Calu3 (cell line): ENCODE measurements at regions of chr18 and their contacts with region 1.

Region 1: GRCh38 chr18:32470713-32471633 is at the start of gene GAREM1:
- DNase-seq: peak; percentile 96
- H3K4me3 Mint-ChIP-seq: peak within 1 kb of the TSS; percentile 80
- H3K27ac Mint-ChIP-seq: peak within 1 kb of the TSS; percentile 48
- H3K4me1 Mint-ChIP-seq: peaks cover 51% of the 10 kb centered on the region
- H3K27me3 Mint-ChIP-seq: no peaks in the 10 kb centered on the region
- CTCF ChIP-seq: peak; percentile 62
- total RNA-seq, gene GAREM1: 17.0 and 19.3 TPM in 2 replicates

Region 2: GRCh38 chr18:32158108-32158624 is 312.8 kb before region 1 on chr18:
- CTCF ChIA-PET with region 1: interaction called, 20 read pairs
- intact Hi-C with region 1: loop called (anchors 2 kb)
- DNase-seq: peak; percentile 78
- H3K4me3 Mint-ChIP-seq: peak overlapping the region; percentile 71
- H3K27ac Mint-ChIP-seq: no peak overlapping the region
- H3K4me1 Mint-ChIP-seq: peaks cover 20% of the 10 kb centered on the region
- H3K27me3 Mint-ChIP-seq: no peaks in the 10 kb centered on the region
- CTCF ChIP-seq: peak; percentile 80

Region 3: DNA sequence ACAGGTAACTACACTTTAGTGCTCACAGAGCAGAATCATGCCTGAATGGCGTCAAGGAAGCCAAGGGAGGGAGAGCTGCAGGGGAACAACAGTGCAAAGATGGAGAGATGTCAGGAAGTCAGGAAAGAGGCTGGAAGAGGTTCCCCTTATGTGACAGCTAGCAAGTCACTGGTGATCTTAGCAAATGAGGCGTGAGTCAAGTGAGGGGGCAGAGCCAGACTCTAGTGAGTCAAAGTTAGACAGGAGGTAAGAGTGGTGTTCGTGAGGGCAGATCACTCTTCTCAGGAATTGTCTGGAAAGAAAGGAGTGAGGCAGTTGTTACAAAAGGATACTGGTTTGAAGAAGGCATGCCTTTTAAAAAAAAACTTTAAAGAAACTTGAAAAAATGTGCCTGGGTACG is 194.1 kb before region 1 on chr18:
- CTCF ChIA-PET with region 1: interaction called, 43 read pairs
- intact Hi-C with region 1: loop called (anchors 5 kb)
- DNase-seq: no peak
- H3K4me3 Mint-ChIP-seq: no peak overlapping the region
- H3K27ac Mint-ChIP-seq: no peak overlapping the region
- H3K4me1 Mint-ChIP-seq: peaks cover 41% of the 10 kb centered on the region
- H3K27me3 Mint-ChIP-seq: no peaks in the 10 kb centered on the region
- CTCF ChIP-seq: no peak

Region 4: DNA sequence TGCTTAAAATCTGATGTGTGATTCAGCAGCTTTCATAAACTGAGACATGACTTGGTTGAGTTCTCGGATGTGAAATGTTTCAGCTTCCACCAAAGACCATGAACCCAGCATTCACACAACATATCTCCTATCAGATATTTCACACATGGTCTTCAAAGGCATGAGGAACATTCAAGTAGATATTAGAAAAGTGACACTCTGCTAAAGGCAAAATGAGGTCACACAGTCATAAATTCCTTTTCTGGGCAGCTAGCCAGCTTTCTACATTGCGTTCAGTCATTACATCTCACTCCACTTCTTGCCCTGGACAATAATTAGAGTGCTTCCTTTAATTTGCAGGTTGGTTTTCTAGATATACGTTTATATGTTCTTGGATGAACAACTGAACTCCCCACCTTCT is 97.0 kb before region 1 on chr18:
- CTCF ChIA-PET with region 1: interaction called, 21 read pairs
- intact Hi-C with region 1: loop called (anchors 2 kb)
- DNase-seq: peak; percentile 53
- H3K4me3 Mint-ChIP-seq: peak overlapping the region; percentile 5
- H3K27ac Mint-ChIP-seq: peak overlapping the region; percentile 78
- H3K4me1 Mint-ChIP-seq: peaks cover 52% of the 10 kb centered on the region
- H3K27me3 Mint-ChIP-seq: no peaks in the 10 kb centered on the region
- CTCF ChIP-seq: no peak

Region 5: DNA sequence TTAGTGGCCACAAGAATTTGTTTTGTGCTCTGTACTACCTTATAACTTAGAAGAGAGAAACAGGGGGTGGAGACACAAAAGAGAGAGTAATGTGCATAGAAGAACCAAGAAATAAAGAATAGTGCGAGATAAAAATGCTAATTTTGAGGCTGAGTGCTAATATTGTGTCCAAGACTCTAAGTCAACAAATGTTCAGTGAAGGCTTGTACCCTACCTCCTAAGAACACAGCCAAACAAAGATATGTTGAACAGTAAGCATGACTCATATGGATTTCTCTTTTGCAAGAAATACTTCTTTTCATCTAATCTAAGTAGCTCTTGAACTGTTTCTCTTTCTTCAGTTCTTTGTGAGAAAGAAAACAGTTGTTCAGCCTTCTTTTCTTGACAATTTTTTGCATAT is 45.5 kb before region 1 on chr18:
- CTCF ChIA-PET with region 1: interaction called, 3 read pairs
- intact Hi-C with region 1: loop called (anchors 5 kb)
- DNase-seq: no peak
- H3K4me3 Mint-ChIP-seq: no peak overlapping the region
- H3K27ac Mint-ChIP-seq: peak overlapping the region; percentile 56
- H3K4me1 Mint-ChIP-seq: peaks cover 66% of the 10 kb centered on the region
- H3K27me3 Mint-ChIP-seq: no peaks in the 10 kb centered on the region
- CTCF ChIP-seq: no peak

Region 6: DNA sequence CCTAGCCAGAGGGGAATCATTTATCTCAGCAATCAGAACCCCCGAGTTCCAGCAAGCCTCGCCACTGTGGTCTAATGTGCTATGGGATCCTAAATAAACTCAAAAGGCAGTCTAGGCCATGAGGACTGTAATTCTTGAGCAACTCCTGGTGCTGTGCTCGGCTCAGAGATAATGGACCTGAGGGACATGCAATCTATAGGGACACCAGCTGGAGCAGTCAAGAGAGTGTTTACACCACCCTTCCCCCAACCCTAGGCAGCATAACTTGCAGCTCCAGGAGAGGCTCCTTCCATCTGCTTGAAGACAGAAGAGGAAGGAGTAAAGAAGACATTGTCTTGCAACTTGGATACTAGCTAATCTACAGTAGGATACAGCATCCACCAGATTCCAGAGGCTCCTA is 527.3 kb after region 1 on chr18:
- CTCF ChIA-PET with region 1: no interaction called
- intact Hi-C with region 1: no loop called
- DNase-seq: no peak
- H3K4me3 Mint-ChIP-seq: no peak overlapping the region
- H3K27ac Mint-ChIP-seq: no peak overlapping the region
- H3K4me1 Mint-ChIP-seq: no peaks in the 10 kb centered on the region
- H3K27me3 Mint-ChIP-seq: no peaks in the 10 kb centered on the region
- CTCF ChIP-seq: no peak